HAP-1 (cell line): ENCODE measurements at regions of chr17 and their contacts with region 1.

Region 1: DNA sequence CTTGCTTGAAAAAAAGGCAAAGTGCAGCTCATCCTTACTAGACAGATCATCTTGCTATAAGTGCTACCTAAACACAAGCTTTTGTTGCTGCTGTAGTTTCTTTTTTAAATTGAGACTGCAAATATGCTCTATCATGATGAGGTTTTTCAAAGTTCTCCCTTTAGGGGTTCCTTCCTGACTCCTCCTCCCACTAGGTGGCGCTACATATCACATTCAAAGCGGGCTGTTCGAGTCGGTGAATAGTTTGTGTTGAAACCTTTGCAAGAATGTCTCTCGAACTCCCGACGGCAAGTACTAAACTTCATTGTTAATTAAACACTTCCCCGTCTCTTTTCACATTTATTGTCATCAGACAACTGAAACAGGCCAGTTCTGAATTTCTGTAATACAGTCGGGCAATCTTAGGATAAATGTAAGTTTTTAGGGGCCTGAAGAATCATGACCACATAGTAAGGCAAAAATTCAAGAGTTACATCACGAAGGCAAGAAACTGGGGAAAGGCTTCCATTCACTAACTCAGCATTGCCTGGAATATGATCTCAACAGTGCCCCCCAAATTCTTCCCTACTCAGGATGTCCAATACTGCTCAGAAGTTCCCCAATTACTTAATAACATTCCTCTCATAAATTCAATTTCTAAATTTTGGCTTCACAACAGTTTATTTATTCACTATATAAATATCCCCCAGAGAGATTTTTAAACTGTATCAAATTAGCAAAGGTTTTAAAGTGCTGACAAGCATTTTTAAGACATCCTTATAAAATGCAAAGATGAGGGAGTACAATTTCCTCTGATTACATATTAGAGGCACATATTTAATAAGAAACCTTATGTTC is 6.7 kb downstream of the HS3ST3A1 start:
- DNase-seq: peak; percentile 33 to 79
- H3K4me3 ChIP-seq: no peak overlapping the region
- H3K4me1 ChIP-seq: no peaks in the 10 kb centered on the region; the same call in 1 of the 2 replicates
- H3K27me3 ChIP-seq: no peaks in the 10 kb centered on the region

Region 2: DNA sequence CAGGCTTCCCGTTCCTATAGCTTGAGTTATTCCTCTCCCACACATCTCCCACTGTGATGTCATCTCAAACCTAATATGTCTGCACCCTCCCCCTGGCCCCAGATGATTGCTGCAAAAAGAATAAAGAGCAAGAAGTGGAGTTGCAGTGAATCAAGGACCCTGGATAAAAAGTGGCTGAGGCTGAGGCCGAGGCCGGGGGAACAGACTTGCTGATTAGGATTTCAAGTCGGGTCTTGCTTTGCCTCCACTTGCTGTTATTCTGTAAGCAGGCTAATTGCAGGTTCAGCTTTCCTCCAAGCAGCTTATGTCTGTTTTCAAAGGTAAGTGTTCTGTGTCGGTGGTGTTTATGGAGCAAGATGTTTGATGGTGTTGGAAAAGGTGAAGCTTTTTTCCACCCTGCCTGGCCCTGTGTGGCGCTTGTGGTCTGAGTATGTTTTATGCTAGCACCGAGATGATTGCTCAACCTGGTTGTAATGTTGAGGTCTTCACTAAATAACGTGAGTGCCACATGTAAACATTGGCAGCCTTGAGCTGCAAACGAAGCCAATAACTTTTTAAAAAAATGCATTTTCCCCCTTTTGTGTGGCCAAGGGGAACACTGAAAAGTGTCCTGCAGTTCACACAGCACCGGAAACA is 721.3 kb after region 1 on chr17:
- in situ Hi-C with region 1: loop called (anchors 10 kb)
- DNase-seq: no peak
- H3K4me3 ChIP-seq: no peak overlapping the region
- H3K4me1 ChIP-seq: no peaks in the 10 kb centered on the region
- H3K27me3 ChIP-seq: no peaks in the 10 kb centered on the region

Region 3: GRCh38 chr17:14926526-14927122 is 1331.6 kb after region 1 on chr17:
- in situ Hi-C with region 1: loop called (anchors 10 kb)
- DNase-seq: peak; percentile 13 to 49
- H3K4me3 ChIP-seq: no peak overlapping the region
- H3K4me1 ChIP-seq: no peaks in the 10 kb centered on the region
- H3K27me3 ChIP-seq: no peaks in the 10 kb centered on the region